ENCODE measurements at regions of chr6 and their contacts with region 1.

Region 1: GRCh38 chr6:73129653-73130443 is 95.4 kb downstream of the KHDC1L start:
- DNase-seq: peak; percentile 66
- CTCF ChIP-seq: peak; percentile 99

Region 2: GRCh38 chr6:72616406-72617015 is 513.3 kb before region 1 on chr6:
- CTCF ChIA-PET with region 1: interaction called, 300 read pairs
- POLR2A ChIA-PET with region 1: no interaction called
- DNase-seq: peak; percentile 34
- CTCF ChIP-seq: peak; percentile 67

Region 3: DNA sequence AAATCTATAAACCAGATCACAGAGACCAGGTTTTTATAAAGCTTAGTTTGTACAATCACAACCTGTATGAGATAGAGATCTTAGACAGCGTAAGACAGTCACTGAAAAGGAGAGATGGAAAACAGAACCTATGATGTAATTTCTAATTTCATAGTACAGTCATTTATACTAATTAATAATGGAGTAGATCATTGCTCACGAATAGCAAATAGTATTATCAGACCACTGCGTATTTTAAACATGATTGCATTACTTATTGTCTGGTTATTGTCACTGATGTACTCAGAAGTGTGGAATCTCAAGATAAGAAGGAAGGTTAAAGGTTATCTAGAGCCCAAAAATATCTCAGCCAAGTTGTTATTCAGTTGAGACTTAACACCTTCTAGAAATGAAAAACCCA is 20.2 kb before region 1 on chr6:
- CTCF ChIA-PET with region 1: interaction called, 46 read pairs
- POLR2A ChIA-PET with region 1: no interaction called
- DNase-seq: no peak
- CTCF ChIP-seq: no peak

Region 4: DNA sequence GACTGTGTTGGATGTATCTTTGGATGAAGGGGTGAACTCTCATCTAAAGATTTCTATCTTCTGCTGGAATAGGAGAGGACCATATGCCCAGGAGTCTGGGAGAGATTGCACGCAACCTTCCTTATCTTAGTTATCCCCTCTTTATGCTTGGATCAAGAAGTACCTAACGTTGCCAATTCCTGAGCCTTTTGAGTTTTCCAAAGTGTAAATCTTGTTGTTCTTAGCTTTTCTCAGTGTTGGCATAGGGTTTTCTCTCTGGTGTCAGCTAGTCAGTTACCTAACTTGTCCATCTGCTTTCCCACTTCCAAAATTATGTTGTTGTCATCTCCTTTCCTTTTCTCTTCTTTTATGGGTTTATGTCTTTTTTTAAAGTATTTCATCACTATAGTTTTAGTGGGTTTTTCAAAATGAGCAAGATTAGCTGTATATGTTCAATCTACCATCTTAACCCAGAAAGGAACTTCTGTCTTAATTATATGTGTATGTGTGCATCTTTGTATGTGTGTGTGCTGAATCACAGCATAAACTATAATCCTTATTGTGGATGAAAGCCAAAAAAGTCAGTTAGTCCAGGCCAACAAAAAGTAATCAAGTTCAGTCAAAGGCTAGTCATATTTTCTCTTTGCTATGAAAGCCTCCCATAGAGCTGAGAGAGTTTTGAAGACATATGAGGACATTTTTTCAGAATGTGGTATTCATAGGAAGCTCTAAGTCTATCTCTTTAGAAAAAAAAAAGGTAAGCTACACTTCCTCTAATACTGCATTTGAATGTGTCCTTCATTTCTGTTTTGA is 23.3 kb after region 1 on chr6:
- CTCF ChIA-PET with region 1: interaction called, 20 read pairs
- POLR2A ChIA-PET with region 1: no interaction called
- DNase-seq: no peak
- CTCF ChIP-seq: no peak

Region 5: GRCh38 chr6:73349311-73349710 is 219.5 kb after region 1 on chr6:
- CTCF ChIA-PET with region 1: no interaction called
- POLR2A ChIA-PET with region 1: no interaction called
- DNase-seq: no peak
- CTCF ChIP-seq: no peak

Measured in GM10248 (cell line).